OCI-LY7 (cell line): ENCODE measurements at regions of chr6 and their contacts with region 1.

Region 1: DNA sequence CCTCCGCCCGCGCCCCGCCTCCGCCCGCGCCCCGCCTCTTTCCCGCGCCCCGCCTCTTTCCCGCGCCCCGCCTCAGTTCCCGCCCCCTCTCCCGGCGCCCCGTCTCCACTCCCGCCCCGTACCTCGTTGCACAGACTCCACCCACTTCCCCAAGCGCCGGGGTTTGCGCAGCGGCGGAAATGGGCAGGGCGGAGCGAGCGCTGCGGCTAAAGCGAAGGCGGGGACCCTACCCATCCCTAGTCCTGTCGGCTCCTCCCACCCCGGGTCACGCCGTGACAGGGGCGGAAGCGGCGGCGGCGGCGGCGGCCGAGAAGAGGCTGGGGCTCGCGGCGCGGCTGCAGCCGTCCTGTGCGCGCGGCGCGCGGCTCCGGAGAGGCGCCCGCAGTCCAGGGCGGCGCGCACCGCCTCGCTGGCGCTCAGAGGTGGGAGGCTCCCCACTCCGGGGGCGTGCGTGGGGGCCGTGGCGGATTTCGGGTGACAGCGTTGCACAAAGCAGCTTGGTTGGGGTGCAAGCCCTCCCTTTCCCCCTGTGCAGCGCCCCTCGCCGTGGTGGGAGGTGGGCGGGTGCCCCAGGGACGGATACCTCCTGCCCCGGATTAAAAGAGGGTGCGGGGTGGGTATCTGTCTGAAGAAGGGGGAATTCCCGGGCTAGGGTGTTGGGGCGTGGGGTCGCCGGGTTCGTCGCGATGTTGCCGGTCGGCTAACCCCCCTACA is at the start of gene KDM1B:
- DNase-seq: peak; percentile 99
- H3K4me3 ChIP-seq: peak within 1 kb of the TSS; percentile 98
- H3K27ac ChIP-seq: peak within 1 kb of the TSS; percentile 82
- H3K4me1 ChIP-seq: peaks cover 30% of the 10 kb centered on the region
- CTCF ChIP-seq: no peak
- total RNA-seq, gene KDM1B: 30.4 and 37.6 TPM in 2 replicates

Region 2: DNA sequence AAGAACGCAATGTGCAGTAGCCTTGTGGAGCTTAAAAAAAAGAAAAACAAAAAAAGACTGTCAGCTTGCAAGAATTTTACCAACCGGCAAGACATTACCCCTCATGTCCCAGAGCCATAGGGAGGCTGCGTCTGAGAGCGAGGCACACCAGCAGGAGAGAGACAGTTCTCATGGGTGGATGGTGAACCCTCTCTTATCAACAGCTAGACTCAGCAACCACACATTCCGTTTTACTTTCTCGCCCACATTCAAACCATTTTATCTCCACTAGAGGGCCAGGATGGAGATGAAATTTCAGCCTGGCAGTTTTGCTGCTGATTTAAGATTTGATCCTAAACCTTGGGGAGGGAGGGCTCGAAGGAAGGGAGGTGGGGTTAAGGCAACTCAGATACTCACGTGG is 1641.1 kb before region 1 on chr6:
- CTCF ChIA-PET with region 1: no interaction called
- POLR2A ChIA-PET with region 1: no interaction called
- intact Hi-C with region 1: loop called (anchors 10 kb)
- DNase-seq: no peak
- H3K4me3 ChIP-seq: no peak overlapping the region
- H3K27ac ChIP-seq: no peak overlapping the region
- H3K4me1 ChIP-seq: no peaks in the 10 kb centered on the region
- CTCF ChIP-seq: peak; percentile 56

Region 3: DNA sequence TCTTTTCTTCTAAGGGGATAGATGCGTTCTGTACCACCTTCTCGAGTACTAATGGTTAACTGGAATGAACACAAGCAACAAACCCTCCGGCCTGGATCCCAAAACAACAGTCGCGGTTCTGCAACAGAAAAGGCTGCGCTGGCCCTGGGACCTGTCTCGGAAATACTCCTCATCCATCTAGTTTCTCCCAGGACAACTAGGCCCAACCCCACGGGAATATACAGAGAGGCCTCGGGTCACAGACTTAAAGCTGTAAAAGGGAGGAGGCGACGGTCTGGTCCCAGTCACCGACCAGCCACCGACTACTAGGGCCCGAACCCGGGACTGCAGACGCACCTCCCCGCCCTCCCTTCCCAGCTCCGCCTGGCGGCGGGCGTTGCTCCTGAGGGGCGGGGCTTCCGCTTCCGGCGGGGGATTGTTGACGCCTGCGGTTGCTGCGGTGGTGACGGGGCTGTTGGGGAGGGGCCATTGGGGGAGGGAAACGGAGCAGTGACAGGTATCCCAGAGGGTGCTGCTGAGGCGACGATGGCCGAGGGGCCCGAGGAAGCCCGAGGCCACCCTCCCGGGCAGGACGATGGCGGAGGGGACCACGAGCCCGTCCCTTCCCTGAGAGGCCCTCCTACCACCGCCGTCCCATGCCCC is 555.3 kb before region 1 on chr6 and contains the start of gene FAM8A1:
- CTCF ChIA-PET with region 1: no interaction called
- POLR2A ChIA-PET with region 1: no interaction called
- intact Hi-C with region 1: loop called (anchors 2 kb)
- DNase-seq: peak; percentile 95
- H3K4me3 ChIP-seq: peak within 1 kb of the TSS; percentile 81
- H3K27ac ChIP-seq: peak within 1 kb of the TSS; percentile 65
- H3K4me1 ChIP-seq: peaks cover 24% of the 10 kb centered on the region
- CTCF ChIP-seq: 0 out of 2 replicates have a peak, but pooled peaks have one; percentile 34
- total RNA-seq, gene FAM8A1: 6.5 and 7.1 TPM in 2 replicates

Region 4: GRCh38 chr6:17706580-17707370 is 448.5 kb before region 1 on chr6 and contains the start of gene NUP153:
- CTCF ChIA-PET with region 1: no interaction called
- POLR2A ChIA-PET with region 1: interaction called, 5 read pairs
- intact Hi-C with region 1: loop called (anchors 2 kb)
- DNase-seq: peak; percentile 98
- H3K4me3 ChIP-seq: peak within 1 kb of the TSS; percentile 100
- H3K27ac ChIP-seq: peak within 1 kb of the TSS; percentile 95
- H3K4me1 ChIP-seq: peaks cover 28% of the 10 kb centered on the region
- CTCF ChIP-seq: no peak
- total RNA-seq, gene NUP153: 66.3 and 72.5 TPM in 2 replicates

Region 5: GRCh38 chr6:17932330-17932852 is 222.9 kb before region 1 on chr6:
- CTCF ChIA-PET with region 1: no interaction called
- POLR2A ChIA-PET with region 1: no interaction called
- intact Hi-C with region 1: no loop called
- DNase-seq: no peak
- H3K4me3 ChIP-seq: no peak overlapping the region
- H3K27ac ChIP-seq: no peak overlapping the region
- H3K4me1 ChIP-seq: no peaks in the 10 kb centered on the region
- CTCF ChIP-seq: no peak

Region 6: GRCh38 chr6:18264219-18264922 is 109.1 kb after region 1 on chr6 and contains the start of gene DEK:
- CTCF ChIA-PET with region 1: no interaction called
- POLR2A ChIA-PET with region 1: interaction called, 5 read pairs
- intact Hi-C with region 1: loop called (anchors 1 kb)
- DNase-seq: peak; percentile 86
- H3K4me3 ChIP-seq: peak within 1 kb of the TSS; percentile 90
- H3K27ac ChIP-seq: peak within 1 kb of the TSS; percentile 91
- H3K4me1 ChIP-seq: peaks cover 44% of the 10 kb centered on the region
- CTCF ChIP-seq: peak; percentile 73
- total RNA-seq, gene DEK: 235 and 462 TPM in 2 replicates

Region 7: GRCh38 chr6:18343741-18344140 is 188.4 kb after region 1 on chr6:
- CTCF ChIA-PET with region 1: no interaction called
- POLR2A ChIA-PET with region 1: no interaction called
- intact Hi-C with region 1: no loop called
- DNase-seq: no peak
- H3K4me3 ChIP-seq: peak overlapping the region; percentile 26
- H3K27ac ChIP-seq: peak overlapping the region; percentile 89
- H3K4me1 ChIP-seq: peaks cover 72% of the 10 kb centered on the region
- CTCF ChIP-seq: peak; percentile 44; the same call in 1 of the 2 replicates

Region 8: GRCh38 chr6:18392346-18392884 is 237.1 kb after region 1 on chr6:
- CTCF ChIA-PET with region 1: no interaction called
- POLR2A ChIA-PET with region 1: no interaction called
- intact Hi-C with region 1: loop called (anchors 5 kb)
- DNase-seq: peak; percentile 51
- H3K4me3 ChIP-seq: peak overlapping the region; percentile 48
- H3K27ac ChIP-seq: peak overlapping the region; percentile 58
- H3K4me1 ChIP-seq: peaks cover 63% of the 10 kb centered on the region
- CTCF ChIP-seq: peak; percentile 75

Region 9: DNA sequence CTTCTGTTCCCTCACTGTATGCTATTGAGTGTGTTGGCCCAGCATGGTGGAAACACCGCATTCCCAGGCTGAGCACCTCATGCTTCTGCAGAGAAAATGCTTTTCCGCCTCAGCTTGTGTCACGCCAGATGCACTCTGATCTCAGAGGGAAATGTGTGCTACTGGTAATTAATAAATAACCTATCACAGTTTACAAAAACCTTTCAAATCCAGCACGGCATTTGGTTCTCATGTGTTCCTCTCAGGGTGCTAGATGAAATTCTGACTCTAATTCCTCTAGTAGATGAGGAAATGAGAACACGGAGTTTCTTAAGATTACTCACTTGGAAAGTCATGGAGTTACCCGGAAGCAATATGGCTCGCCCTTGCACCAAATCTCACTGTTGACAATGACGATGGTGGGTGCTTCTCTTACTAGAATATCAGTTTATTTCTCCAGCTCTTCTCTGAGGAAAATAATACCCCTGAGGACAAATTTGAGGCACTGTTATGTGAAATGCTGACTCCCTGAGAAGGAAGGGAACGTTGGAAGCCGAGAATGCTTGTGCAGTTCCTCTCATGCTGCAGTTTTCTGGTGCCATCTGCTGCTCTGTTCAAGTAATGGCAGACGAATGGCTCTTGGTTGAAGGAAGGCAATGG is 348.4 kb after region 1 on chr6:
- CTCF ChIA-PET with region 1: no interaction called
- POLR2A ChIA-PET with region 1: no interaction called
- intact Hi-C with region 1: loop called (anchors 10 kb)
- DNase-seq: peak; percentile 89
- H3K4me3 ChIP-seq: peak overlapping the region; percentile 45
- H3K27ac ChIP-seq: no peak overlapping the region
- H3K4me1 ChIP-seq: peaks cover 15% of the 10 kb centered on the region
- CTCF ChIP-seq: peak; percentile 100